IMR-90 (cell line): ENCODE measurements at regions of chr21 and their contacts with region 1.

Region 1: GRCh38 chr21:39313571-39314142 is at the start of gene BRWD1:
- DNase-seq: peak; percentile 81
- ATAC-seq: peak; percentile 67
- H3K4me3 ChIP-seq: peak within 1 kb of the TSS; percentile 49
- H3K27ac ChIP-seq: peak within 1 kb of the TSS; percentile 93
- H3K4me1 ChIP-seq: peaks cover 4% of the 10 kb centered on the region
- H3K27me3 ChIP-seq: no peaks in the 10 kb centered on the region
- CTCF ChIP-seq: peak; percentile 37
- POLR2A ChIP-seq: peak; percentile 60; the same call in 1 of the 2 replicates
- RAD21 ChIP-seq: peak; percentile 26; the same call in 1 of the 2 replicates
- total RNA-seq, gene BRWD1: 28.7 and 55.5 TPM in 2 replicates

Region 2: GRCh38 chr21:39238275-39238674 is 75.4 kb before region 1 on chr21:
- CTCF ChIA-PET with region 1: no interaction called
- POLR2A ChIA-PET with region 1: no interaction called
- dilution Hi-C with region 1: no loop called
- in situ Hi-C with region 1: no loop called
- intact Hi-C with region 1: no loop called
- DNase-seq: no peak
- ATAC-seq: no peak
- H3K4me3 ChIP-seq: no peak overlapping the region
- H3K27ac ChIP-seq: no peak overlapping the region
- H3K4me1 ChIP-seq: no peaks in the 10 kb centered on the region
- H3K27me3 ChIP-seq: no peaks in the 10 kb centered on the region
- CTCF ChIP-seq: no peak
- POLR2A ChIP-seq: no peak
- RAD21 ChIP-seq: no peak

Region 3: GRCh38 chr21:39281207-39281606 is 32.5 kb before region 1 on chr21:
- CTCF ChIA-PET with region 1: interaction called, 5 read pairs
- POLR2A ChIA-PET with region 1: interaction called, 10 read pairs
- dilution Hi-C with region 1: no loop called
- in situ Hi-C with region 1: no loop called
- intact Hi-C with region 1: no loop called
- DNase-seq: no peak
- ATAC-seq: no peak
- H3K4me3 ChIP-seq: no peak overlapping the region
- H3K27ac ChIP-seq: no peak overlapping the region
- H3K4me1 ChIP-seq: no peaks in the 10 kb centered on the region
- H3K27me3 ChIP-seq: no peaks in the 10 kb centered on the region
- CTCF ChIP-seq: no peak
- POLR2A ChIP-seq: no peak
- RAD21 ChIP-seq: no peak

Region 4: GRCh38 chr21:39327727-39328126 is 14.1 kb after region 1 on chr21:
- CTCF ChIA-PET with region 1: no interaction called
- POLR2A ChIA-PET with region 1: interaction called, 12 read pairs
- dilution Hi-C with region 1: no loop called
- in situ Hi-C with region 1: no loop called
- intact Hi-C with region 1: no loop called
- DNase-seq: no peak
- ATAC-seq: no peak
- H3K4me3 ChIP-seq: no peak overlapping the region
- H3K27ac ChIP-seq: no peak overlapping the region
- H3K4me1 ChIP-seq: no peaks in the 10 kb centered on the region; the same call in 1 of the 2 replicates
- H3K27me3 ChIP-seq: no peaks in the 10 kb centered on the region
- CTCF ChIP-seq: no peak
- POLR2A ChIP-seq: no peak
- RAD21 ChIP-seq: no peak

Region 5: GRCh38 chr21:39348355-39349210 is 34.9 kb after region 1 on chr21 and contains the start of gene HMGN1:
- CTCF ChIA-PET with region 1: no interaction called
- POLR2A ChIA-PET with region 1: no interaction called
- dilution Hi-C with region 1: no loop called
- in situ Hi-C with region 1: no loop called
- intact Hi-C with region 1: loop called (anchors 1 kb)
- DNase-seq: peak; percentile 86
- ATAC-seq: peak; percentile 80
- H3K4me3 ChIP-seq: peak within 1 kb of the TSS; percentile 94
- H3K27ac ChIP-seq: peak within 1 kb of the TSS; percentile 79
- H3K4me1 ChIP-seq: peaks cover 5% of the 10 kb centered on the region
- H3K27me3 ChIP-seq: no peaks in the 10 kb centered on the region
- CTCF ChIP-seq: peak; percentile 24; the same call in 1 of the 2 replicates
- POLR2A ChIP-seq: peak; percentile 85
- RAD21 ChIP-seq: no peak
- total RNA-seq, gene HMGN1: 55.2 and 234 TPM in 2 replicates

Region 6: DNA sequence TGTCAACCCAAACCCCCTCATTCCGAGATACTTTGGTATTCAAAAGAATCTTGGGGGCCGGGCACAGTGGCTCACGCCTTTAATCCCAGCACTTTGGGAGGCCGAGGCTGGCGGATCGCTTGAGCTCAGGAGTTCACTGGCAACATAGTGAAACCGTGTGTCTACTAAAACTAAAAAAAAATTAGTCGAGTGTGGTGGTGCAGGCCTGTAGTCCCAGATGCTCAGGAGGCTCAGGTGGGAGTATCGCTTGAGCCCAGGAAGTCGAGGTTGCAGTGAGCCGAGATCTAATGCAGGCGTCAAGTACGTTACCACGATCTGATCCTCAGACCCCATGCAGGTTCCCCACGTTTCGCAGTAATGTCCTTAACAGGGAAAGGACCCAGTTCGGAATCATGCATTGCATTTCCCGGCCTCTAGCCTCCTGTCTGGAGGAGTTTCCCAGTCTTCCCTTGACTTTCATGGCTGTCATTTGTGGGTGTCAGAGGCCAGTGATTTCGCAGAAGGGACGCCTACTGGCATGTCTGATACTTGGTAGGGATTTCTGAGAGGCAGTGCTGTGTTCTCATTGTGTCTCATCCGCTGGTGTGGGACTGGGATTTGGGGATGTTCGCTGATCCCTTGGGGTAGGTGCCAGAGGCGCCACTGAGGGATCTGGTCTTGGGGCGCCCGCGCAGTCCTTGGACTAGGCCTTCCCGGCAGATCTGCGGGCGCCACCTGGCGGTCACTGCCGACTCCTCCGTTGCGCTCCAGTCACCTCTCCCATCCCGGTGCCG is 74.6 kb after region 1 on chr21:
- CTCF ChIA-PET with region 1: interaction called, 3 read pairs
- POLR2A ChIA-PET with region 1: interaction called, 4 read pairs
- dilution Hi-C with region 1: no loop called
- in situ Hi-C with region 1: loop called (anchors 5 kb)
- intact Hi-C with region 1: loop called (anchors 1 kb)
- DNase-seq: peak; percentile 77
- ATAC-seq: peak; percentile 82
- H3K4me3 ChIP-seq: peak overlapping the region; percentile 56
- H3K27ac ChIP-seq: peak overlapping the region; percentile 6; the same call in 1 of the 2 replicates
- H3K4me1 ChIP-seq: peaks cover 14% of the 10 kb centered on the region
- H3K27me3 ChIP-seq: no peaks in the 10 kb centered on the region
- CTCF ChIP-seq: peak; percentile 86
- POLR2A ChIP-seq: no peak
- RAD21 ChIP-seq: peak; percentile 84

Region 7: DNA sequence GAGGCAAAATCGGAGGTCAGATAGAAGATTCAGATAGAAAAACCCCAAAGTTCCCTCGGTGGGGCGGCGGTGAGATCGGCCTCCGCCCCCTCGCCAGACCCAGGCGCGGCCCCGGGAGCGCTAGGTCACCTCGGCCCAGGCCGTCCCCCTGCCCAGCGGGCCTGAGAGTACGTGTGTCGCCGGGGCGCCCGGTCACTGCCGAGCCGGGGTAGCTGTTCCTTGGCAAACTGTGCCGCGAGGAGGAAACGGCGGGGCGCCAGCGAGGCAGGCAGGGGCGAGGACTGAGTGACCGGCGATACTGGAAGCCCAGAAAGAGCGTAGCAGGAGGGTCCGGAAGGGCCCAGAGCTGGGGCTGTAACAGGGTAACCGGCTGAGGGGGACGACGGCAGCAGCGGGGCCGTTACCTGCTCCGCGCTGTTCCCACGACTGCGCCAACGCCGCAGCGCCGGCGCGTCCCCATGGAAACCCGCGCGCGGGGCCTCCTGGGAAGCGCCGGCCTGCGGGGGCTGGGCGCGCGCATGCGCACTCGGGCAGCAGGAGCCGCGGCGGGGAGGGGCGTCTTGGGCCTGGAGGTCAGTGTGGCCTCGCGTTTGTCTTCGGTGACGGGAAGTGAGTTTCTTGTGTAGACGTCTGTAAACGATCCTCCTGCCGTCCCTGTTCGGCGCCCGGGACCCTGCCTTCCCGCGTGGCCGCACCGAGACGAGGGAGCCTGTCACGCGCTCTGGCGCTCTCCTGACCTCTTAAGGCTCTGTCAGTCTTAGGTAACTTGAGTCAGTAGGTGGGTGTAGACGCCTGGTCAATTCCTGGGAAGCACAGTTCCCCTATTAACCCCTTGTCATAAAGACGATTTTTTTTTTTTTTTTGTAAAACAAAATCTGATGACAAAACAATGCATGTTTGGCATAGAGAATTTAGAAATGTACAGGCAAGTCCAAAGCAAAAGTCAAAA is 131.9 kb after region 1 on chr21 and contains the start of gene LCA5L:
- CTCF ChIA-PET with region 1: no interaction called
- POLR2A ChIA-PET with region 1: no interaction called
- dilution Hi-C with region 1: no loop called
- in situ Hi-C with region 1: no loop called
- intact Hi-C with region 1: loop called (anchors 2 kb)
- DNase-seq: peak; percentile 81
- ATAC-seq: peak; percentile 85
- H3K4me3 ChIP-seq: peak within 1 kb of the TSS; percentile 96
- H3K27ac ChIP-seq: peak within 1 kb of the TSS; percentile 95
- H3K4me1 ChIP-seq: peaks cover 4% of the 10 kb centered on the region
- H3K27me3 ChIP-seq: peaks cover 2% of the 10 kb centered on the region; the same call in 1 of the 2 replicates
- CTCF ChIP-seq: peak; percentile 26; the same call in 1 of the 2 replicates
- POLR2A ChIP-seq: peak; percentile 59; the same call in 1 of the 2 replicates
- RAD21 ChIP-seq: no peak
- total RNA-seq, gene LCA5L: 0.18 and 0.28 TPM in 2 replicates